ENCODE measurements at regions of chr9 and their contacts with region 1.

Region 1: DNA sequence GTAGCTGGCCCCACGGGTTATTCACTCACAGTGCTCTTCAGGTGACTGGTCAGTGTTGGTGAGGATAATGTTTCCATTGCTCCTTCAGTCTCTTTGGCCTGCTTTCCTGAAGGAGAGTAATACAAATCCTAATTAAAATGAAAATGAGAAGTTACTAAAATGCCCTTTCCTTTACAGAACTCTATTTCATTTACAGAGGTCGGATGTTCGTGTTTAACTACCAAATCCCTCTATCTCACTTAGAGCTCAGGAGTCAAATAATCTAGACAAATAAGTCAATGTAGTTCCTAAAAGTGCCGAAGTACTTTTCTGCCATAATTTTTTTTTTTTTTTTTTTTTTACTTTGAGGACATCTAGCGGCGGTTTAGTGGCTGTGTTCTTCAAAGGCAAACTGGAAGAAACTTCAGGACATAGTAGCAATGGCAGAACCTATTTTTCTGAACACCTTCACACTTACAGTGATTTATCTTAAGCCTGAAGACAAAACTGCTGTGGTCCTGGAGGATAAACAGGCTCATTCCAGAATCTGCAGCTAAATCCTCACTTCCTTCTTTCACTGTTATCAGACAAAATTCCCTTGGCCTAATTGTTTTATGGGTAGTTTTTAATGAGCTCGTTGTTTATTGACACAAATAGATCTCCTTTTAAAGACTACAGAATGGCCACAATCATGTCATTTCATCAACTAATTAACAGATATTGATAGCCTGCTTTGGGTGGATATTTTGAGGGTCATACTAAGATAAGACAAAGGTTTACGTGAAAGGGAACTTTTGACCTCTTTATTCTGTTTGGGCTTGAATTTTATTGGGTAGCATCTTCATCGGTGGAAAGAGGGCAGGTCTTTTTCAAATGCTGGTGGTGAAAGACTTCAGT is 207.6 kb upstream of the DMRTA1 start:
- DNase-seq: no peak
- H3K4me3 ChIP-seq: no peak overlapping the region
- H3K27ac ChIP-seq: no peak overlapping the region
- H3K4me1 ChIP-seq: no peaks in the 10 kb centered on the region
- H3K27me3 ChIP-seq: no peaks in the 10 kb centered on the region
- CTCF ChIP-seq: peak in 1 of 3 donors; percentile 21
- POLR2A ChIP-seq: no peak

Region 2: DNA sequence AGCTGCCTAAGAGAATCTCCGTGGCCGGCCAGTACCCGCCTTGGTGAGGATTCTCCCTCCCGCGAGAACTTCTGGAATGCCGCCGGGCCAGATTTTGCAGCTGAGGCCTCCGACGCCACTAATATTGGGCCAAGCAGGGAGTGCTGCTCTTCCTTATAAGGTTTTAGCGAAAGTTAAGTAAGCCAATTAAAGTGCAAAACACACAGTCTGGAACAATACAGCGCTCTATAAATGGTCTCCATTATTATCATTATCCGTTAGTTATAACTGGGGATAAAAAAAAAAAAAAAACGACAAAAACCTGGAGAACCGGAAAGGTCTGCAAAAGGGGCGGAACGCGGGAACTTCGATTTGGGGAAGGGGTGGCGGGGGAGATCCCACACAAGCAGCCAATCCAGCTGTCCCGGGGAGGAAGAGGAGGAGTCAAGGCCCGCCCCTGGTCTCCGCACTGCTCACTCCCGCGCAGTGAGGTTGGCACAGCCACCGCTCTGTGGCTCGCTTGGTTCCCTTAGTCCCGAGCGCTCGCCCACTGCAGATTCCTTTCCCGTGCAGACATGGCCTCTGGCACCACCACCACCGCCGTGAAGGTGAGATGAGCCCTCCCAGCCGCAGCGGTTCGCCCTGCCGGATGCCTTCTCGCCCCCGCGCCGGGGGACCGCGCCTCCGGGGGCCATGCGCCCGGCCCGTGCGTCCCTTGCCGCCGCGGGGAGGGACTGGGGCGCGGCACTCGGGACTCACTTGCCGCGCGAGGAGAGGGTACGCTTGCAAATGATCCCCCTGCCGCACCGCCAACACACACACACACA is 436.6 kb before region 1 on chr9 and contains the start of gene MTAP:
- intact Hi-C with region 1: loop called (anchors 10 kb)
- DNase-seq: peak; percentile 90 to 94
- H3K4me3 ChIP-seq: peak within 1 kb of the TSS; percentile 76 to 93 (median 84)
- H3K27ac ChIP-seq: peak within 1 kb of the TSS; percentile 97 to 98
- H3K4me1 ChIP-seq: peaks cover 0 to 10% of the 10 kb centered on the region in 2 donors
- H3K27me3 ChIP-seq: no peaks in the 10 kb centered on the region
- CTCF ChIP-seq: no peak
- POLR2A ChIP-seq: peak; percentile 37
- total RNA-seq, gene MTAP: 20.8 to 40.2 (median 29.5) TPM

Region 3: GRCh38 chr9:22288661-22289060 is 49.6 kb after region 1 on chr9:
- intact Hi-C with region 1: no loop called
- DNase-seq: no peak
- H3K4me3 ChIP-seq: no peak overlapping the region
- H3K27ac ChIP-seq: no peak overlapping the region
- H3K4me1 ChIP-seq: no peaks in the 10 kb centered on the region
- H3K27me3 ChIP-seq: no peaks in the 10 kb centered on the region
- CTCF ChIP-seq: no peak
- POLR2A ChIP-seq: no peak